Cardiac septum (tissue), 1 donor: ENCODE measurements at regions of chr11 and their contacts with region 1.

Region 1: GRCh38 chr11:59753650-59754493 is 1.3 kb upstream of the STX3 start:
- DNase-seq: peak; percentile 94

Region 2: GRCh38 chr11:59413646-59414045 is 340.2 kb before region 1 on chr11:
- intact Hi-C with region 1: no loop called
- DNase-seq: no peak

Region 3: GRCh38 chr11:59550368-59550841 is 203.5 kb before region 1 on chr11:
- intact Hi-C with region 1: loop called (anchors 10 kb)
- DNase-seq: peak; percentile 84

Region 4: DNA sequence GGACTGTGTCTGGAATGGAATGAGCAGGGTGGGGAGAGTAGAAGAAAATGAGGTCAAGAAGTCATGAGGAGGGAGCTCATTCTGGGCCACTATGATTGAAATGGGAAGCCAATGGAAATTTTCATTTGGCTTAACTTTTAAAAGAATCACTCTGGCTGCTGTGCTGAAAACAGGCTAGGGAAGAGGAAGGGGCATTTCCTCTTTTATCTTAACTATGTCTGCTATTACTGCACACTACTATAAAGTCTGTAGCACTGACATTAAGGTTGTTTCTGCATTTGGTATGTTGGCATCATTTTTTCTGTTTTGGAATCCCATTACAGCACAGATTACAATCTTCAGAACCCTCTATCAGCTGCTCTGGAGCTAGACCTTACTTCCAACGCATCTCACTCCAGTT is 93.3 kb before region 1 on chr11:
- intact Hi-C with region 1: no loop called
- DNase-seq: no peak

Region 5: DNA sequence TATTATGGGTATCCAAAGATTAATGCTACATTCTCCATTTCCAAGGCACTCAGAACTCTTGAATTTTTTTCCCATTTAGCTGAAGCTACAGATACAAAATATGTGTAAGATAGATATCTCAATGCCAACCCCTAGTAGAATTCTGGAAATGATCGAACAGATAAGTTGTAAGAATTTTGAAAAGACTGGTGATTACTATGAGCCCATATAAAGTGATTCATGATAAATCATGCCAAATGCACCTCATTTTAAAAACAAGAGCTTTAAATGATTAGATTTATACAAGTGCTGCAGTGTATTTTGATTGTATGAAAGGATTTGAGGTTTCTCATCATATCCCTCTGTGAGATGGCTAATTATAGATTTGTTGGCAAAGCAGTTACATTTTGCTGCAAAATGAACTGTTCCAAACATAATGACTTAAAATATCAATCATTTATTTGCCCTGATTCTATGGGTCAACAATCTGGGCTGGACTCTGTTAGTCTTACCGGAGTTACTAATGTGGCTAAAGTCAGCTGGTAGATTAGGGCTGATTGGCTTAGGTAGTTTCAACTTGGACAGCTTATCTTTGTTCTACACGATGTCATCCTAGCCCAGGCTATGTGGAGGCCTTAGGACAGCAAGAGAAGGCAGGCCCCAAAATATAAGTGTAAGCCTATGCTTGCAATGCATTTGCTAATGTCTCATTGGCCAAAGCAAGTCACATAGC is 43.6 kb before region 1 on chr11:
- intact Hi-C with region 1: no loop called
- DNase-seq: no peak

Region 6: DNA sequence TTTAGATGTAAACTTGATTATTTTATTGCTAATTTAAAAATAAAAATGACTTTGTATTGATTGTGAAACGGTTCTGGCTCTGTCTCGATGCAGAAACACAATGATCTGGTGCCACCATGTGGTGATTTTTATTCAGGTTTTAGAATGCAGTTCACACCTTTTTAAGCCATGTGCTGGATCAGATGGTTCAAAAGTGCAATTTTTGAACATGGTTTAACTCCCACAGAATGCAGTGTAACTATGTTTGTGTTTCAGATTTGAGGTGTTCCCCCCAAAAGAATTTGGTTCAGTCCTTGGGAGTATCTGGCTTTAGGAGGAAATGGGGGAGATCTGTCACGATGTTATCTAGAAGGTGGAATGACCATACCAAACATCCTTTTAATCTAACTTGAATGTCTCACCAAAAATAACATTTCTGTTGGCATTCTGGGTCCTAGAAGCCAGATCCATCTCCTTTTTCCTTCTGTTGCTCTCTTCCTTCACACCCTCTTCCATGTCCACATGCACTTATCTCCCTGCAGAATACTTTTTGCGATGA is 48.8 kb after region 1 on chr11:
- intact Hi-C with region 1: loop called (anchors 1 kb)
- DNase-seq: no peak

Region 7: GRCh38 chr11:59810189-59810910 is 56.5 kb after region 1 on chr11 and contains the start of gene MRPL16:
- intact Hi-C with region 1: loop called (anchors 2 kb)
- DNase-seq: peak; percentile 93
- total RNA-seq, gene MRPL16: 64.7 TPM